ENCODE measurements at regions of chr18 and their contacts with region 1.

Region 1: DNA sequence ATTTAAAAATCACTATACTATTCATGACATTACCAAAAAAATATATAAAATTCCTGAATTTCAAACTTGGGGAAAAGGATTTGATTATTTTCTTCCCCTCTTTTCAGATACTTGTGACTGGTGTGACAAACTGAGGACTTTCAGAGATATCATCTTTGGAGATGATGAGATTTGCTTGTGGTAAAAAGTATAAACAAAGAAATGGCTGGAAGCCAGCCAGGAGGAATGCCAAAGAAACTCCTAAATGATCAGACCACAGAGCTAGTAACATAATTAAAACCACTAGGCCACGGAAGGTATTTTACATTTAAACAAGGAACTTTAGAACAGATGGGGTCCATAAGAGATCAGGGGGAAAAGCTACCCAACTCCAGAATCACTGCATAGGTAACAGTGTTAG is 58.7 kb downstream of the PIGN start:
- DNase-seq: no peak
- ATAC-seq: no peak
- H3K4me3 ChIP-seq: no peak overlapping the region
- H3K27ac ChIP-seq: no peak overlapping the region
- H3K4me1 ChIP-seq: no peaks in the 10 kb centered on the region
- H3K27me3 ChIP-seq: no peaks in the 10 kb centered on the region
- CTCF ChIP-seq: no peak

Region 2: GRCh38 chr18:61569176-61569892 is 558.8 kb before region 1 on chr18:
- intact Hi-C with region 1: loop called in 1 of 2 experiments (anchors 10 kb)
- DNase-seq: no peak
- ATAC-seq: no peak
- H3K4me3 ChIP-seq: no peak overlapping the region
- H3K27ac ChIP-seq: no peak overlapping the region
- H3K4me1 ChIP-seq: no peaks in the 10 kb centered on the region
- H3K27me3 ChIP-seq: no peaks in the 10 kb centered on the region
- CTCF ChIP-seq: no peak

Region 3: GRCh38 chr18:61901323-61901986 is 226.7 kb before region 1 on chr18:
- intact Hi-C with region 1: loop called in 1 of 2 experiments (anchors 10 kb)
- DNase-seq: peak in 1 of 4 donors; percentile 42
- ATAC-seq: peak; percentile 98
- H3K4me3 ChIP-seq: no peak overlapping the region
- H3K27ac ChIP-seq: no peak overlapping the region
- H3K4me1 ChIP-seq: no peaks in the 10 kb centered on the region
- H3K27me3 ChIP-seq: peaks cover 0 to 11% of the 10 kb centered on the region in 2 donors
- CTCF ChIP-seq: peak; percentile 89 to 92